Breast epithelium (tissue), 4 donors: ENCODE measurements at regions of chr11 and their contacts with region 1.

Region 1: DNA sequence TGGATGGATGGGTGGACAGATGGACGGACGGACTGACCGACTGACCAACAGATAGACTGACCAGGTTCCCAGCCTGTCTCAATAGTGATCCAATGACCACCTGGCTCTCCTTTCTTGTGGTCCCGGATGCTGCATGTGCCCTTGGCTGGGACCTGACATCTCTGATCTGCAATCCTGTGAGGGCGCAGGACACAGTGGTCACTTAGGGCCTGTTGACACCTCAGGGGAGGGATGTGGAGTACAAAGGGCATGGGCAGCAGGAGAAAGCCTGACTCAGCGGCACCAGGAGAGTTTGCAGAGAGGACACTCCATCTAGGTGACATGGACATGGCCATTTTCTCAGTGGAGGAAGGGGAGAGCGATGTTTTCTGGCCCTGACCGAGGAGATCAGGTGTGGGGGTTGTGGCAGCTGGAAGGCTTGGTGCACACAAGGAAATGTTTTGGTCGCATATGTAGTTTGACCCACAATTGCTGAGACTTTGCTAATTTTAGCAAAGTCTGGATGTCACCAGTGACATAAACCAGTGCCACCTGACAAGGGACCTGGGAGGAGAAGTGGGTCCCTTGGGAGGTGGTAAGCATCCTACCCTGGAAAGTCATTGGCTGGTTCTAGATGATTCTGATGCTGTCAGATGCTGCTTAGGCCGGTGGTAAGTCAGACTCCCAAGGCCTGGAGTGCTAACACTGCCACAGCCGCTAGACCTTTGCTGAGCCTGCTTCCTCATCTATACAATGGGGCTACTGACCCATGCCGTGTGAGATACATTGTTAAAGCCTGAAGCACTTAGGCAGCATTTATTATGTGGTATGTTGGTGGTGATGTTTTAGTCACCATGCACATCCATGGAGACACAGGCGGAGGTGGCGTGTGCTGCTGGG is 50.7 kb downstream of the CD82 start:
- DNase-seq: no peak
- H3K4me3 ChIP-seq: no peak overlapping the region
- H3K27ac ChIP-seq: no peak overlapping the region
- H3K4me1 ChIP-seq: no peaks in the 10 kb centered on the region
- H3K27me3 ChIP-seq: no peaks in the 10 kb centered on the region
- CTCF ChIP-seq: no peak
- POLR2A ChIP-seq: no peak

Region 2: DNA sequence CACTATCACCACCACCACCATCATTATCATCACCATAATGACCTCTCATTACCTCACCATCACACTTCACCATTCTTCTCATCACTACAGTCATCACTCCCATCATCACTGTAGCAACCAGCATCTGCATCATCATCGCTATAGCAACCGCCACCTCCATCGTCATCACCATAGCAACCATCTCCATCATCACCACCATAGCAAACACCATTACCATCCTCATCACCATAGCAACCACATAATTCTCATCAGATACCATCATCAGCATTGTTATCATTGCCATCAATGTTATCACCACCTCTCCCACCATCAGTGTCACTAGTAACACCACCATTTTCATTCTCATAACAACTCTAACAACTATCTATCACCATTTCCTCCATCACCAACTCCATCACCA is 73.8 kb before region 1 on chr11:
- intact Hi-C with region 1: no loop called
- DNase-seq: no peak
- H3K4me3 ChIP-seq: no peak overlapping the region
- H3K27ac ChIP-seq: no peak overlapping the region
- H3K4me1 ChIP-seq: no peaks in the 10 kb centered on the region
- H3K27me3 ChIP-seq: no peaks in the 10 kb centered on the region
- CTCF ChIP-seq: no peak
- POLR2A ChIP-seq: no peak

Region 3: DNA sequence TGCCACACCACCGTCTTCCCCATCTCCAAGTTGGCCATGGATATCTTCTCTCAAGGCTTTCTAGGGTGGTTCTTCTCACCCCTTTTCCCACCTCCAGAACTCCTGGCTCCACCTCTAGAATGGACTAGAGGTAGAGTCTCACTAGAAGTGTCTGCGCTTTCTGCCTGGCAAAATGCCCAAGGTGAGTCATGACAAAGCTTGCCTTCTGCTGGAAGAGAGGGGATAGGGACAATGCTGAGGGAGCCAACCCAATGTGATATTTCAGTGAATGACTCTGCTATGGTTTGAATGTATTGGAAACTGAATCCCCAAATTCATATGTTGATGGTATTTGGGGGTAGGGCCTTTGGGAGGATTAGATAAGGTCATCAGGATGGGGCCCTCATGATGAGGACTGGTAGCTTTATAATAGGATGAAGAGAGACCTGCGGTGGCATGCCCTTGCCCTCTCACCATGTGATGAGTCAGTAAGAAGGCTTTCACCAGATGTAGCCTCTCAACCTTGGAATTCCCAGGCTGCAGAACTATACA is 54.8 kb before region 1 on chr11:
- intact Hi-C with region 1: loop called (anchors 2 kb)
- DNase-seq: no peak
- H3K4me3 ChIP-seq: no peak overlapping the region
- H3K27ac ChIP-seq: no peak overlapping the region
- H3K4me1 ChIP-seq: peaks cover 7 to 20% of the 10 kb centered on the region in 2 donors
- H3K27me3 ChIP-seq: no peaks in the 10 kb centered on the region
- CTCF ChIP-seq: no peak
- POLR2A ChIP-seq: no peak